Mammary epithelial cell (primary cell): ENCODE measurements at regions of chr15 and their contacts with region 1.

Region 1: GRCh38 chr15:32987067-32987466 is 207.4 kb downstream of the FMN1 start:
- DNase-seq: no peak
- H3K4me3 ChIP-seq: no peak overlapping the region
- H3K27ac ChIP-seq: no peak overlapping the region
- H3K4me1 ChIP-seq: no peaks in the 10 kb centered on the region
- H3K27me3 ChIP-seq: no peaks in the 10 kb centered on the region
- CTCF ChIP-seq: no peak

Region 2: GRCh38 chr15:32899126-32899596 is 87.9 kb before region 1 on chr15:
- CTCF ChIA-PET with region 1: no interaction called
- dilution Hi-C with region 1: no loop called
- in situ Hi-C with region 1: no loop called
- intact Hi-C with region 1: no loop called
- DNase-seq: no peak
- H3K4me3 ChIP-seq: no peak overlapping the region
- H3K27ac ChIP-seq: no peak overlapping the region
- H3K4me1 ChIP-seq: no peaks in the 10 kb centered on the region
- H3K27me3 ChIP-seq: no peaks in the 10 kb centered on the region
- CTCF ChIP-seq: no peak

Region 3: GRCh38 chr15:32956006-32956405 is 31.1 kb before region 1 on chr15:
- CTCF ChIA-PET with region 1: no interaction called
- dilution Hi-C with region 1: no loop called
- in situ Hi-C with region 1: no loop called
- intact Hi-C with region 1: loop called (anchors 5 kb)
- DNase-seq: peak; percentile 25
- H3K4me3 ChIP-seq: no peak overlapping the region
- H3K27ac ChIP-seq: no peak overlapping the region
- H3K4me1 ChIP-seq: no peaks in the 10 kb centered on the region
- H3K27me3 ChIP-seq: no peaks in the 10 kb centered on the region
- CTCF ChIP-seq: peak; percentile 54 to 75

Region 4: DNA sequence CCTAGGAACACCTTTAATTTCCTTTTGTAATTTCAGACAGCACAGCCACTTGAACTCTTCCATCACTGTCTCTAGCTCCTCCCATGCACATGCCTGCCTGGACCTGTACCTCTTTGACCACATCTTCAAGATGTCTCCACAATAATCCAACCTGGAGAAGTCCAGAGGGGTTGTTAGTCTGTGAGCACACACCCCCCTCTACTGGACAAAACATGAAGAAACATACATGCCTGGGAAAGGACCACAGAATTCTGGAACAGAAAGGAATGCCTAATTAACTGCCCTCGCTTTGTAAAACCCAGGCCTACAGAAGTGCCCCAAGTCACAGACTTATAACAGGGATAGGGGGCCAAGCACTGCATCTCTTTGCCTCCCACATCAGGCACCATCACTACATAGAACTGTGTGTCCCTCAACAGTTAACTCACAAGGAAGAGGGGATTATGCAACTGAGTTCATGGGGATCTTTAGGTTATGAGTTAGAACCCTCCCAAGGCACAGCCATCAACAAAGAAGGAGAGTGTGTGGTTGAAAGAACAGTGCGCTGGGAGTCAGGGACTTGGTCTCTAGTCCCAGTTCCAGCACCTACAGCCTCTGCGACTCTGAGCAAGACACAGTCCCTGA is 145.8 kb after region 1 on chr15:
- CTCF ChIA-PET with region 1: no interaction called
- dilution Hi-C with region 1: no loop called
- in situ Hi-C with region 1: no loop called
- intact Hi-C with region 1: no loop called
- DNase-seq: peak; percentile 92
- H3K4me3 ChIP-seq: no peak overlapping the region
- H3K27ac ChIP-seq: peak overlapping the region; percentile 7
- H3K4me1 ChIP-seq: peaks cover 23% of the 10 kb centered on the region
- H3K27me3 ChIP-seq: no peaks in the 10 kb centered on the region
- CTCF ChIP-seq: peak; percentile 81 to 82

Region 5: DNA sequence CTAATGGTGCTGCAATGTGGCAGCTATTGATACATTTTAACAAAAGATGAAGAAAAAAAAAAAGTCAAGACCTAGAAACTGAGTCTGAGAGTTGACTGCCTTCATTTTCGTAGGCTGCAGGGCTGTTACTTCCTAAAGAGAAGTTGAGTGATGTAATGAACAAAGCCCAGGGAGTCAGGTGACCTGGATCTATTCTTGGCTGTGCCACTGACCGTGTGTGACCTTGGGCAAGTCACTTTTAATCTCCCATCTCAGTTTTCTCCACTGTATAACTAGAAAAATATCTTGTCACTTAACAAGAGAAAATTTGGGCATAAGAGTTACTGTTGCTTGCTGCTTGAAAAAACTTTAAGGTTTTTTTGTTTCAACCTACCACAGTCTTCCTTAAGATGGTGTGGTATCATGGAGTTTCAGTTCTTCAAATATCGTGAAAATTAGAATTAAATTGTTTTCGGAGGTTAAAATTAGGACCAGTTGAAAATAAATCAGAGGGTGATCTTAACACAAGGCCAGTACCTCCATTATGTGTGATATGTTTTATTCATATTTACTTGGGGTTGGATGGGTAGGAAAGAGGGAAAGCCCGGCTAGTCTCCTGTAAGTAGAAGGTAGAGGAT is 201.7 kb after region 1 on chr15:
- CTCF ChIA-PET with region 1: no interaction called
- dilution Hi-C with region 1: no loop called
- in situ Hi-C with region 1: no loop called
- intact Hi-C with region 1: no loop called
- DNase-seq: no peak
- H3K4me3 ChIP-seq: no peak overlapping the region
- H3K27ac ChIP-seq: no peak overlapping the region
- H3K4me1 ChIP-seq: no peaks in the 10 kb centered on the region
- H3K27me3 ChIP-seq: peaks cover 2% of the 10 kb centered on the region
- CTCF ChIP-seq: no peak